H1 (cell line): ENCODE measurements at regions of chr7 and their contacts with region 1.

Region 1: GRCh38 chr7:143380255-143380645 is 895 bp upstream of the ZYX start:
- DNase-seq: peak; percentile 50 to 96
- H3K4me3 ChIP-seq: peak overlapping the region; percentile 76 to 100 (median 88)
- H3K27ac ChIP-seq: peak overlapping the region; percentile 93
- H3K4me1 ChIP-seq: peaks cover 5 to 17% (median 6%) of the 10 kb centered on the region in 4 experiments
- H3K27me3 ChIP-seq: no peaks in the 10 kb centered on the region
- CTCF ChIP-seq: peak in 2 of 3 experiments; percentile 74 to 75; a peak in 3 of 4 replicates
- EP300 ChIP-seq: no peak
- POLR2A ChIP-seq: no peak; a peak in 2 of 3 replicates
- RAD21 ChIP-seq: peak; percentile 37 to 57

Region 2: DNA sequence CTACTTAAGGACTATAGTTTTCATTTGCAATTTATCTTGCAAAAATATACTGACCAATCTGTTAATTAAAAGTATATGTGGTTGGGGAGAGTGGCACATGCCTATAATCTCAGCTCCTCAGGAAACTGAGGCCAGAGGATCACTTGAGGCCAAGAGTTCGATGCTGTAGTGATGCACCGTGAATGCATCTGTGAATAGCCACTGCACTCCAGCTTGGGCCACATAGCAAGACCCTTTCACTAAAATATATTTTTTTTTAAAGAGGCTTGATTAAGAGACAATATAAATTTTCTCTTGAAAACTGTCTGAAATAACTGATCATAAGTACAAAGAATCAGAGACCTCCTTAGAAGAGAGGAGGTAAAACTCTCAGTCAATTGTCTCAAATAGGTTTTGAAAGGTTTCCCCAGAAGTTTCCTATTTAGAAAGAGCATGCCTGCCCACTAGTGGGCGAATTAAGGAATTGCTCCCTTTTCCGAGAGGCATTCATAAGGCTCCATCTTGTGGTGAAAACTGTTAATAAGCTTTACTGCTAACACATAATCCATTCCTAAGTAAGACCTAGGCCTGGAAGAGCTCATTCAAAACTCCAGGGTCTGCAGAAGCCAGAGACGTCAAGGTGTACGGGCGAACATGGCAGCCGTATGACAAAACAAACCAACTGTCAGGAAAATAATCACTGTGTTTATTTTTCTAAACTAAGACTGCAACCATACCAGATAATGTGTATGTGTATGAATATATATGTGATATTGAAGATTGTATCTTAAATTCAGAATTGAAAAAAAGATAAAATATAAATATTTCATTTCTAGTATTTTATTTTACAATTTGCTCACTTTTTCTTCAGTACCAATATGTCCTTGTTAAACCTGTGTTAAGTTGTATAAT is 165.2 kb before region 1 on chr7:
- CTCF ChIA-PET with region 1: no interaction called
- POLR2A ChIA-PET with region 1: no interaction called
- DNase-seq: peak; percentile 49 to 66
- H3K4me3 ChIP-seq: no peak overlapping the region
- H3K27ac ChIP-seq: no peak overlapping the region
- H3K4me1 ChIP-seq: no peaks in the 10 kb centered on the region
- H3K27me3 ChIP-seq: no peaks in the 10 kb centered on the region
- CTCF ChIP-seq: peak in 2 of 3 experiments; percentile 99 to 100; a peak in 3 of 4 replicates
- EP300 ChIP-seq: no peak
- POLR2A ChIP-seq: no peak
- RAD21 ChIP-seq: peak; percentile 100

Region 3: DNA sequence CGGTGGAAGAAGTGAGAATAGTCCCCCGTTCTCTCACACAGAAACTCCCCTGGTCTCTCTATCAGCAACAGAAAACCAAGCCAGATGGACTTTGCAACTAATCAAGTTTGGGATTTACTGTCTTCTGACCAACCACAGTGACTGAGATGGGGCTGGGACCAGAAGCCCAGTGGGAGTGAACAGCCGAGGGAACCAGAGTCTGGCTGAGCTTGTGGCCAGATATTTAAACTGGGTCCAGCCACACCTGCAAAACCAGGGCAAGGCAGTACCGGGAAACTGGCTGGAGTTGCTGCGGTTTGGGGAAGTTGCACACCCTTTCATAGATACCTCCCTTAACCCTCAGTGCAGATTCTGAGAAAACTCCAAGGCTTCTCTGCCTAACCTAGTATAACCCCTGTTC is 111.0 kb before region 1 on chr7:
- CTCF ChIA-PET with region 1: no interaction called
- POLR2A ChIA-PET with region 1: no interaction called
- DNase-seq: no peak
- H3K4me3 ChIP-seq: no peak overlapping the region
- H3K27ac ChIP-seq: no peak overlapping the region
- H3K4me1 ChIP-seq: 0 out of 7 replicates have a peak, but pooled peaks cover 0 to 2% (median 0%) of the 10 kb centered on the region in 4 experiments
- H3K27me3 ChIP-seq: peaks cover 0 to 3% (median 0%) of the 10 kb centered on the region in 4 experiments; a peak in 2 of 7 replicates
- CTCF ChIP-seq: no peak
- EP300 ChIP-seq: no peak
- POLR2A ChIP-seq: no peak
- RAD21 ChIP-seq: no peak

Region 4: GRCh38 chr7:143362131-143363015 is 17.9 kb before region 1 on chr7 and contains the start of gene FAM131B:
- CTCF ChIA-PET with region 1: interaction called, 27 read pairs
- POLR2A ChIA-PET with region 1: interaction called, 233 read pairs
- DNase-seq: peak in 1 of 2 experiments; percentile 76
- H3K4me3 ChIP-seq: peak within 1 kb of the TSS; percentile 80 to 98 (median 80)
- H3K27ac ChIP-seq: no peak within 1 kb of the TSS
- H3K4me1 ChIP-seq: peaks cover 4 to 12% (median 10%) of the 10 kb centered on the region in 4 experiments
- H3K27me3 ChIP-seq: peaks cover 0 to 13% (median 8%) of the 10 kb centered on the region in 4 experiments; a peak in 4 of 7 replicates
- CTCF ChIP-seq: no peak
- EP300 ChIP-seq: no peak
- POLR2A ChIP-seq: no peak
- RAD21 ChIP-seq: no peak
- total RNA-seq, gene FAM131B: 35.5 and 38.2 TPM in 2 replicates

Region 5: GRCh38 chr7:143408686-143409561 is 28.7 kb after region 1 on chr7 and contains the start of gene EPHA1:
- CTCF ChIA-PET with region 1: interaction called, 359 read pairs
- POLR2A ChIA-PET with region 1: interaction called, 518 read pairs
- DNase-seq: peak; percentile 50 to 83
- H3K4me3 ChIP-seq: peak within 1 kb of the TSS; percentile 86 to 91 (median 88)
- H3K27ac ChIP-seq: peak within 1 kb of the TSS; percentile 71
- H3K4me1 ChIP-seq: peaks cover 18 to 42% (median 31%) of the 10 kb centered on the region in 4 experiments
- H3K27me3 ChIP-seq: no peaks in the 10 kb centered on the region
- CTCF ChIP-seq: peak; percentile 47 to 72 (median 58)
- EP300 ChIP-seq: peak in 1 of 2 experiments; percentile 39; a peak in 1 of 3 replicates
- POLR2A ChIP-seq: peak in 1 of 2 experiments; percentile 34; a peak in 1 of 3 replicates
- RAD21 ChIP-seq: peak; percentile 47 to 57
- total RNA-seq, gene EPHA1: 133 and 139 TPM in 2 replicates

Region 6: DNA sequence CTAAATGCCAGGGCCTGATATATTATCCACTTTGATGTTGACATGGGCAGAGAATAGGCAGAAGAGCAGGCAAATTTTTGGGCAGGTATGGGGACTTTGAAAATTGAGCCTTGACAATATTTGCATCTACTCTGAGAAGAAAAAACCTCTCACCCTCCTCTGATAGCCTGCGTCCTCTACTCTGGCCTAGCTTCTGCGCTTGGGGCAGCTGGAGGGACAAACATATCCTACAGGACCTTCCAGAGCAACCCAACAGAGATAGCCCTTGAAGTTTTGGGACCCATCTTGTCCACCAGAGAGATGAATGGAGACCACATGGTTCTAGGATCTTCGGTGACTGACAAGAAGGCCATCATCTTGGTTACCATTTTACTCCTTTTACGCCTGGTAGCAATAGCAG is 62.9 kb after region 1 on chr7 and contains the start of gene TAS2R60:
- CTCF ChIA-PET with region 1: no interaction called
- POLR2A ChIA-PET with region 1: no interaction called
- DNase-seq: no peak
- H3K4me3 ChIP-seq: no peak within 1 kb of the TSS
- H3K27ac ChIP-seq: no peak within 1 kb of the TSS
- H3K4me1 ChIP-seq: peaks cover 0 to 6% (median 0%) of the 10 kb centered on the region in 4 experiments; a peak in 1 of 7 replicates
- H3K27me3 ChIP-seq: peaks cover 0 to 1% (median 0%) of the 10 kb centered on the region in 4 experiments; a peak in 1 of 7 replicates
- CTCF ChIP-seq: no peak
- EP300 ChIP-seq: no peak
- POLR2A ChIP-seq: no peak
- RAD21 ChIP-seq: no peak
- total RNA-seq, gene TAS2R60: 0.32 and 0.46 TPM in 2 replicates